ENCODE measurements at regions of chr14 and their contacts with region 1.

Region 1: DNA sequence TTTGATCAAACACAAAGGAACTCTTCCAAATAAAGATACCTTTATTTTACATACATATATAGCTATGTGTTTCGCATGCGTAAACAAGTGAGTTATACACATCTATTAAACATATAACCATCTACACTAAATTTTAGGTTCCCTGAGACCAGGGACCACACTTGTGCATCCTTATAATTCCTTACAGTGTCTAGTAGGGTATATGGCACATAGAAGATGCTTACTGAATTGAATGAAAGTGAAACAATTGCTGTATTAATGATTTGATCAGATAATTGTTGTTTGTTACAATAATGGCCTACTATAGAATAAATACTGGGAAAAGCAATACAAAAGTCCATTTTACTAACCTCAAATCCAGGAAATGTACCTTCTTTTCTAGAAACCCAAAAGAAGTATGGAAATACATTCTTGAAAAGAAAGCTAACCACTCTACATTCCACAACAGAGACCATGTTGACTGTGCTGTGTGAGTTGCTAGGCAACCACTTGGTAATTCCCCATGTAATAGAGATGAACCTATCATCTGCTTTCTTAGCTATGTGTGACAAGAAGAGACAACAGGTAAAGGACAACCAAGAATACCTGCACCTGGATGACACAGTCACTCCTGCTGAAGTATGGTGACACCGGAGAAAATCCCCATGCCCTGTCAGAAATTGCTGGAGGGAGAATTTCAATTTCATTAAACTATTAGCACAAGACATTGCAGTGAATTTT is 11.9 kb upstream of the CIPC start:
- H3K4me3 ChIP-seq: no peak overlapping the region
- H3K27ac ChIP-seq: no peak overlapping the region
- H3K4me1 ChIP-seq: no peaks in the 10 kb centered on the region; the same call in 1 of the 2 replicates
- CTCF ChIP-seq: no peak

Region 2: DNA sequence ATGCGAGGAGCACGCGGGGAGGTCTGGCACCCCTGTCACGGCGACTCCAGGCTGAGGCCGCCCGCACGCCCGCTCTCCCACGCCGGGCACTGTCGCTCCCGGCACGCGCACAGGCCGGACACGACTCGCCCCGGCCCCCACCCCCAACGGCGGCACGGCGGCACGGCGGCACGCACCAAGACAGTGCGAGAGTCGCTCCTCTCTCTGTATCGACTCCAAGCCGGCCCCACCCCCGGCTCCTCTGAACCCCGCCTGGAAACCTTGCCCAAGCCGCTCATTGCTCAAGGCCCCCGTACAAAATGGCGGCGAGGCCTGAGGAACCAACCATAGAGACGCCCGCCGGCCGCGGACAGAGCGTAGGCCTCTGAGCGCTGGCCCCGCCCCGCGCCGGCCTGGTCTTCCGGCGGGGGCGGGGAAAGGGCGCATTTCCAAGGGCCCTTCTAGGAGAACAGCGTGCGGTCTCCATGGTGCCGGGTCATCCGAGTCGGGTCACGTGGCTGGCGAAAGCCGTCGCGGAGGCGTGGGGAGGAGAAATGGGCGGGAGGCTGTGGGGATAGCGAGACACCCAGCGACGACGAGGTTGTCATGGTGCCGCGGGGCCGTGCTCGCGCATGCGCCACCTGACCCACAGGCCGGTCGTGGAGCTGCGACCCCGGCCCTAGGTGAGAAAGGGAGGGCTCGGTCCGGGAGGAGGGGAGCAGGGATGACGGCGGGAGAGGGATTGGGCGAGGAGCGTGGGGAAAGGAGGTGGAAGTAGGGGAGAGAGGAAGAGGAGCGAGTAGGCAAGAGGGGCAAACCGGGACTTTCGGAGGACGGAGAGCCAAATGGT is 11.7 kb after region 1 on chr14 and contains the start of gene CIPC:
- CTCF ChIA-PET with region 1: interaction called, 28 read pairs
- POLR2A ChIA-PET with region 1: interaction called, 4 read pairs
- H3K4me3 ChIP-seq: peak within 1 kb of the TSS; percentile 88
- H3K27ac ChIP-seq: peak within 1 kb of the TSS; percentile 87
- H3K4me1 ChIP-seq: peaks cover 18% of the 10 kb centered on the region
- CTCF ChIP-seq: peak; percentile 41; the same call in 1 of the 2 replicates